Psoas muscle (tissue), 8 donors: ENCODE measurements at regions of chr16 and their contacts with region 1.

Region 1: DNA sequence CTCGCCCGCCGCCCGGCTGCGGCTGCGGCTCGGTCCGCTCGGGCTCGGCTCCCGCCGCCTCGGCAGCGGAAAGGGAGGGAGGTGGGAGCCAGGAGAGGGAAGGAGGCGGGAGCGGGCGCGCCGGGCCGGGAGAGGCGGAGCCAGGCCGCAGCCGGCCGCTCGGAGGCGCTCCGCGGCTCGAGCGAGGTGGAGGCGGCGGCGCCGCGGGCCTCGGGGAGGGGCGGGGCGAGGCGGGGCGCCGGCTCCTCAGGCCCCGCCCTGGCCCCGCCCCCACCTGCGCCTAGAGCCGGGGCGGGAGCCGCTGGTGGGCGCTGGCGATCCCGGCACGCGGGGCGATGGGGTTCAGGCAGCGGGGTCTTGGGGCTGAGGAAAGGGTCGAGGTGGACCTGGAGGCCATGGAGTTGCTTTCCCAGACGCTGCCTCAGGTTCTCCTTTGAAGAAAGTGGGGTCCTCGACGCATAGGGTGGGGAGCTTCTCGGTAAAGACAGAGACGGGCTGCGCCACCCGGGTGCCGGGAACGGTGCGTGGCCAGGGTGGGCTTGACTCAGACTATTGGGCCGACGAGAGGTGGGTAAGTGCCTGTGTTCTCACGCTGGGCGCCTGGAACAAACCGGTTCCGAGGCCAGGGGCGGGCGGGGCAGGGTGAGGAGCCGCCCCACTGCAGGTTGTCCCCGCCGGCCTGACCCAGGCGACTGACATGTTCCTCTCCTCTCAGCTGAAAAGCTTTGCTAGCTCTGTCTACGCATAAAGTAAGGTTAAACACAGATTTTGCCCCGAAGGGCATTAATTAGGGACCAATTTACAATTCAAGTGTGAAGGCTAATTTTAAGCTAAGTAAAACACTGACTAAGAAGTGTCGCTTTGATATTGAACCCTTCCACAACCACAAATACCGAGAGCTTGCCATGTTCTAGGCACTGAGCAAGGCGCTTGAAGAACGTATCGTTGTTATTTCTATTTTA is at the start of gene CMTM4:
- DNase-seq: peak; percentile 87 to 92
- ATAC-seq: peak; percentile 96 to 97 (median 97)
- H3K4me3 ChIP-seq: peak within 1 kb of the TSS; percentile 85
- H3K27ac ChIP-seq: peak within 1 kb of the TSS; percentile 68
- H3K4me1 ChIP-seq: peaks cover 11% of the 10 kb centered on the region
- H3K27me3 ChIP-seq: no peaks in the 10 kb centered on the region
- CTCF ChIP-seq: peak; percentile 37
- total RNA-seq, gene CMTM4: 7.7 to 10.3 (median 9.1) TPM

Region 2: DNA sequence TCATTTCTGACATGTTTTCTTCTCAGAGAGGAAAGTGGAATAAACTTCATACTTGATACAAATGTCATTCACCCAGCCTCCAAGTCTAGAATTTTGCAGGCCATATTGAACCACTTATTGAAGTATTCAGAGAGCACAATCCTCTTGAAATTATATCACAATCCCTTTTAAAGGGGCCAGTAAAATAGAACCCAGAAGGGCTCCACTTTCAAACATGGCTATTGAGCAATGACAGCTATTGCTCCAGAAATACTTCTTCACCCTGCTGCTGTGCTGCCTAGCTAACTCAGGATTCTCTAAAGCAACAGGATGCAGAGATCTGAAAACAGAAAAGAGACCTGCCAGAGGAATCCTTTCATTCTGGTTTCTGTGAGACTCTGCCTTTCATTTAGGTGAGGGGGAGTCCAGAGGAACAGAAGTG is 605.5 kb before region 1 on chr16:
- intact Hi-C with region 1: no loop called
- DNase-seq: no peak
- ATAC-seq: peak in 1 of 4 donors; percentile 38
- H3K4me3 ChIP-seq: no peak overlapping the region
- H3K27ac ChIP-seq: no peak overlapping the region
- H3K4me1 ChIP-seq: no peaks in the 10 kb centered on the region
- H3K27me3 ChIP-seq: no peaks in the 10 kb centered on the region
- CTCF ChIP-seq: no peak

Region 3: GRCh38 chr16:66618588-66619375 is 78.2 kb before region 1 on chr16:
- intact Hi-C with region 1: loop called in 1 of 2 experiments (anchors 10 kb)
- DNase-seq: peak; percentile 61 to 73
- ATAC-seq: peak; percentile 90 to 95 (median 93)
- H3K4me3 ChIP-seq: no peak overlapping the region
- H3K27ac ChIP-seq: peak overlapping the region; percentile 88
- H3K4me1 ChIP-seq: peaks cover 29% of the 10 kb centered on the region
- H3K27me3 ChIP-seq: no peaks in the 10 kb centered on the region
- CTCF ChIP-seq: no peak

Region 4: GRCh38 chr16:66660422-66661209 is 36.3 kb before region 1 on chr16:
- intact Hi-C with region 1: loop called in 1 of 2 experiments (anchors 2 kb)
- DNase-seq: peak; percentile 65 to 79
- ATAC-seq: peak; percentile 94 to 98 (median 96)
- H3K4me3 ChIP-seq: peak overlapping the region; percentile 28
- H3K27ac ChIP-seq: peak overlapping the region; percentile 80
- H3K4me1 ChIP-seq: peaks cover 15% of the 10 kb centered on the region
- H3K27me3 ChIP-seq: no peaks in the 10 kb centered on the region
- CTCF ChIP-seq: peak; percentile 34